Mammary epithelial cell (primary cell): ENCODE measurements at regions of chr10 and their contacts with region 1.

Region 1: GRCh38 chr10:97498076-97498840 is at the start of gene MMS19:
- DNase-seq: peak; percentile 99
- H3K4me3 ChIP-seq: peak within 1 kb of the TSS; percentile 87 to 98 (median 93)
- H3K27ac ChIP-seq: peak within 1 kb of the TSS; percentile 94
- H3K4me1 ChIP-seq: peaks cover 33% of the 10 kb centered on the region
- H3K27me3 ChIP-seq: no peaks in the 10 kb centered on the region
- CTCF ChIP-seq: no peak
- total RNA-seq, gene MMS19: 69.7 to 74.2 TPM

Region 2: GRCh38 chr10:96949039-96949683 is 549.1 kb before region 1 on chr10:
- CTCF ChIA-PET with region 1: no interaction called
- dilution Hi-C with region 1: no loop called
- in situ Hi-C with region 1: no loop called
- intact Hi-C with region 1: no loop called
- DNase-seq: no peak
- H3K4me3 ChIP-seq: no peak overlapping the region
- H3K27ac ChIP-seq: no peak overlapping the region
- H3K4me1 ChIP-seq: no peaks in the 10 kb centered on the region
- H3K27me3 ChIP-seq: no peaks in the 10 kb centered on the region
- CTCF ChIP-seq: no peak

Region 3: DNA sequence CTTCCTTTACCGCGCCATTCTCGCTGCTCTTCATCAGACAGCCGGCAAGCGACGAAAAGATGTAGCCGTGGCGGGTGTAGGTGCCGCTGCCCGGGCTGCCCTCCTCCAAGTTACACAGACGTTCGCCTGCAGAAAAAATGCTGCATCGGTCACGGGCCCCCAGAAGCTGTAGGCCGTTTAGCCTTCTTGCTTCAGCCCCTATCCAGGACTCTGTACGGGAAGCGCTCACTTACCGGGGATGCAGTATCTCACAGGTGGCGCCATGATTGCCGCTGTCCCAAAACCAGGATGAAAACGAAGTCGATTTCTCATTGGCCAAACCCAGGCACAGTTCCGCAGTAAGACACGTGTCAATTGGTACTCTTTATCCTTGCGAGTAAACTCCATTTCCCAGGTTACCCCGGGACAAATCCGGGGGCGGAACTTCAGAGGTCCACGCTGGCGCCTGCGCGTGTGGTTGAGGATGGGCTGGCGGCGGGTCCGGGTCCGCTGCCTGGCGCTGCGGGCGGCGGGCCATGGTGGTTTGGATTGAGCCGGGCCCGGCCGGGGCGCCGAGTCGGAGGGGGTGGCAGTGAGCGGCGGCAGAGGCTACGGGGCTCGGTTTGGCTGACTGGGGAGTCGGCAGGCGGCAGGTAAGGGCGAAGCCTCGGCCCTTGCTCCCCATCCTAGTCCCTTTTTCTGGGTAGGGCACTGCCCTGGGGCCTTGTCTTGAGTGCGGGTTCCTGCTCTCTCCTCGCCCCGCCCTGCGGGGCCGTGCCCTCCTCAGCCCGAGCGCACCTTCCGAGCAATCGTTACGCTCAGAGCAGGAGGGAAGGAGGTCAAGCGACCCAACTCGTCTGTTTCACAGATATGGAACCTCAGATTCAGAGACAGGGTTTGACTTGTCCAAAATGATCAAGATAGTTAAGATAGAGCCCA is 52.3 kb before region 1 on chr10 and contains the starts of genes EXOSC1 and ZDHHC16:
- CTCF ChIA-PET with region 1: no interaction called
- dilution Hi-C with region 1: no loop called
- in situ Hi-C with region 1: no loop called
- intact Hi-C with region 1: loop called (anchors 5 kb)
- DNase-seq: peak; percentile 96
- H3K4me3 ChIP-seq: peak within 1 kb of the TSS; percentile 68 to 82 (median 72)
- H3K27ac ChIP-seq: peak within 1 kb of the TSS; percentile 47
- H3K4me1 ChIP-seq: peaks cover 26% of the 10 kb centered on the region
- H3K27me3 ChIP-seq: no peaks in the 10 kb centered on the region
- CTCF ChIP-seq: peak in 1 of 2 donors; percentile 23
- total RNA-seq, gene EXOSC1: 35.8 to 37.0 TPM
- total RNA-seq, gene ZDHHC16: 46.3 to 61.3 TPM

Region 4: GRCh38 chr10:97508342-97508741 is 10.1 kb after region 1 on chr10:
- CTCF ChIA-PET with region 1: no interaction called
- dilution Hi-C with region 1: no loop called
- in situ Hi-C with region 1: no loop called
- intact Hi-C with region 1: loop called (anchors 1 kb)
- DNase-seq: peak; percentile 55
- H3K4me3 ChIP-seq: no peak overlapping the region
- H3K27ac ChIP-seq: no peak overlapping the region
- H3K4me1 ChIP-seq: peaks cover 2% of the 10 kb centered on the region
- H3K27me3 ChIP-seq: no peaks in the 10 kb centered on the region
- CTCF ChIP-seq: no peak

Region 5: DNA sequence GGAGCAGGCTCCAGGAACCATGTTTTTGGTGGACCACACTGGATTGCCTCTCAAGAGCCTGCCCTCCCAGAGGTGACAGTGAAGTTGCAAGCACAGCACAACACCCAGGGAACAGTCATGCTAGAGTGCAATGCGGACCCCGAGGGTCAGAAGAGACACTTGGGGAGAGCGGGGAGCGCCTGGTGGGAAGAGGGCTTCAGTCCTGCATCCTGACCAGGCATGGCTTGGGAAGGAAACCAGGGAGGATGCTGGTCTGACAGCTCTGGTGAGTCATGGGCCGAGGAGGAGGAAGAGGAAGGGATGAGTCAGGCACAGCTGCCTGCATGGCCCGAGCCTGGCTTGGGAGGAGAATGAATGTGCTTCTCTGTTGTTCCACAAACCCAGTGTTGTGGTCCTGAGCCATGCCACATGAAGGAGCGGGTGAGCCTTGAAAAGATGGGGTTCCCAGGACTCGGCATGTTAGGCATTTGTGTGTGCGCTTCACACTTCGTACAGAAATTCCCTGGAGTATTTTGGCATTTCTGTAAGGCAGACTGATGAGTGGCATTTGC is 44.8 kb after region 1 on chr10:
- CTCF ChIA-PET with region 1: no interaction called
- dilution Hi-C with region 1: no loop called
- in situ Hi-C with region 1: no loop called
- intact Hi-C with region 1: loop called (anchors 2 kb)
- DNase-seq: peak; percentile 98
- H3K4me3 ChIP-seq: no peak overlapping the region
- H3K27ac ChIP-seq: peak overlapping the region; percentile 84
- H3K4me1 ChIP-seq: peaks cover 59% of the 10 kb centered on the region
- H3K27me3 ChIP-seq: no peaks in the 10 kb centered on the region
- CTCF ChIP-seq: no peak

Region 6: GRCh38 chr10:97572214-97572989 is 74.1 kb after region 1 on chr10 and contains the start of gene ANKRD2:
- CTCF ChIA-PET with region 1: no interaction called
- dilution Hi-C with region 1: no loop called
- in situ Hi-C with region 1: no loop called
- intact Hi-C with region 1: loop called (anchors 2 kb)
- DNase-seq: peak; percentile 67
- H3K4me3 ChIP-seq: peak within 1 kb of the TSS in 2 of 3 experiments; percentile 5 to 12
- H3K27ac ChIP-seq: peak within 1 kb of the TSS; percentile 80
- H3K4me1 ChIP-seq: peaks cover 53% of the 10 kb centered on the region
- H3K27me3 ChIP-seq: no peaks in the 10 kb centered on the region
- CTCF ChIP-seq: peak; percentile 94 to 97
- total RNA-seq, gene ANKRD2: 0.47 to 0.83 TPM